GM23248 (cell line): ENCODE measurements at regions of chr6 and their contacts with region 1.

Region 1: GRCh38 chr6:38493931-38494547 is 145.7 kb downstream of the BTBD9 start:
- DNase-seq: peak; percentile 53
- H3K4me3 ChIP-seq: no peak overlapping the region
- H3K27ac ChIP-seq: no peak overlapping the region
- H3K4me1 ChIP-seq: no peaks in the 10 kb centered on the region
- H3K27me3 ChIP-seq: no peaks in the 10 kb centered on the region

Region 2: DNA sequence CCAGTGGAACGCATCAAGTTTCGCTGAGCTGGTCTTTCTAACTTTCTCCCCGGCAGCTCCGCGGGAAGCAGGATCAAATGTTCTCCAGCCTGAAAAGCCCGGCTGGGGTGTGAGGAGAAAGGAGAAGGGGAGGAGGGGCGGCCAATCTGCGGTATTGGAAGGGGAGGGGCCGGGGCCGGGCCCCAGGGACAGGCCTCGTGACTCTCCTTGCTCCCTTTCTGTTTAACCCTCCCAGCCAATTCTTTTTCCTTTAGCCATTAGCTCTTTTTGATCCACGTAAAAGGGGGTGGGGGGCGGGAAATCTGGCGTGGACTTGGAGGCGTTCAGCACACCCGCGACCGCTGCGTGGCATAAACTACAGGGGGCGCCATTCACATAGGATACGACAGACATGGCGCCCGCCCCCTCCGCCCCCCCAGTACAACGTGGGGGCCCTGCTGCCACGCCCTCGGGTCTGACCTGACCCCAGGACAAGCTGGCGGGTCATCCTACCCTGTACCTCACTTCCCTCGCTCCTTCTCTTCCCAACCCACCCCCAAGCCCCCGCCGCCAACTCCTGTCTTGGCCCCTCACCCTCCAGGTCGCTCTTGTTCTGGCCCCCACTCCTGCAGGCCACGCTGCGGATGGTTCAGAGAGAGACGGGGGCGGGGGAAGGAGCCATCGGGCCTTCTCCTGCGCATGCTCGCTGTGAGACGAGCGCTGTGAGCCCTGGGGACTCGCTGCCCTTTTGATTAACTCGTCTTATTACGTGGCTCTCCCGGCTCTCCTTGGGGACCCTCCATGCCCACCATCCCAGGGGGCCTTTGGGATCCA is 788.6 kb before region 1 on chr6:
- in situ Hi-C with region 1: loop called (anchors 25 kb)
- DNase-seq: peak; percentile 94
- H3K4me3 ChIP-seq: peak overlapping the region; percentile 72
- H3K27ac ChIP-seq: peak overlapping the region; percentile 16; the same call in 1 of the 2 replicates
- H3K4me1 ChIP-seq: no peaks in the 10 kb centered on the region; the same call in 1 of the 2 replicates
- H3K27me3 ChIP-seq: no peaks in the 10 kb centered on the region

Region 3: DNA sequence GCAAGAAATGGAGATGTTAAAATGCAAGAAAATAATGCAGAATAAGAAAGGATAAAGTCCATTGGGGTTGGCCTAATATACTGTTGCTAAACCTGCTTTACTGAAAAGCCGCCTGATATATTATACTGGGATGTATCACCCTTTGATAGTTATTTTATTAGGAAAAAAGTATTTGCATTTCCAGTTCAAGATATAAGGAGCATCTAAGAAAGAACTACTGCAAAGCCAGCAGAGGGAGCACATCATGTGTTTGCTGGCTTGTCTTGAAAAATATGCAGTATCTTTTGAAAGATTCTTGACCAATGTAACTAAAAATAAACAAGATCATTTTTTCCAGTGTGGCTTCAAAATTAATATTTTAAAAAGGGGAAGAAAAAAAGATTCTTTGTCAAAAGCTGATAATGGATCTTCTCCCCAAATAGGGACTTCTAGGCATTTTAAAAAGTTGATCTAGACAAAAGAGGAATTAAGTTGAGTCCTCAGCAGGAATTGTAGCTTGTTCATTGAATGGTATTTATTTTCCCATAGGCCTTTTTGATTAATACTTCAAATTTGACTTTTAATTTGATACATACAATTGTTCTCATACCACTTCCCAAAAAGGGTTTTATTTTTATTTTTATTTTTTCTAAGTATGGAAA is 459.6 kb before region 1 on chr6:
- in situ Hi-C with region 1: loop called (anchors 25 kb)
- DNase-seq: peak; percentile 63
- H3K4me3 ChIP-seq: no peak overlapping the region
- H3K27ac ChIP-seq: no peak overlapping the region
- H3K4me1 ChIP-seq: peaks cover 27% of the 10 kb centered on the region
- H3K27me3 ChIP-seq: no peaks in the 10 kb centered on the region

Region 4: DNA sequence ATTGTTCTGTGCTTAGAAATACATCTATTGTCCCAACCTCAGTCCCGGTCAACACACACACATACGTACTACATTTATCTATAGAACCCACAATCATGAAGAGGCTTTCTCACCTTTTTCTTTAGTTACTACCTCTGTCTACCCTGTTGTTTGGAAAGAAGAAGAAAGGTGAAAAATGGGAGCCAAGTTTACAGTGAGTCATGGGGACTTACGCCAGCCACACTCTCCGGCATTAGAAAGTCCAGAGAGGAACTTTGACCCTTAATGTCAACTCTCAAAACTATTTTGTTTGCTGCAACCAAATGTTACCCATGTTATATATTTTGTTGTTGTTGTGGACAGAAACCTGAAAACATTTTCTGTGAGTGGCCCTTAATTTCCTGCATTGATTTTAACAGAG is 415.4 kb before region 1 on chr6:
- in situ Hi-C with region 1: no loop called
- DNase-seq: no peak
- H3K4me3 ChIP-seq: no peak overlapping the region
- H3K27ac ChIP-seq: no peak overlapping the region
- H3K4me1 ChIP-seq: peaks cover 9% of the 10 kb centered on the region
- H3K27me3 ChIP-seq: no peaks in the 10 kb centered on the region

Region 5: GRCh38 chr6:38279420-38279819 is 214.6 kb before region 1 on chr6:
- in situ Hi-C with region 1: no loop called
- DNase-seq: no peak
- H3K4me3 ChIP-seq: no peak overlapping the region
- H3K27ac ChIP-seq: no peak overlapping the region
- H3K4me1 ChIP-seq: no peaks in the 10 kb centered on the region
- H3K27me3 ChIP-seq: no peaks in the 10 kb centered on the region

Region 6: DNA sequence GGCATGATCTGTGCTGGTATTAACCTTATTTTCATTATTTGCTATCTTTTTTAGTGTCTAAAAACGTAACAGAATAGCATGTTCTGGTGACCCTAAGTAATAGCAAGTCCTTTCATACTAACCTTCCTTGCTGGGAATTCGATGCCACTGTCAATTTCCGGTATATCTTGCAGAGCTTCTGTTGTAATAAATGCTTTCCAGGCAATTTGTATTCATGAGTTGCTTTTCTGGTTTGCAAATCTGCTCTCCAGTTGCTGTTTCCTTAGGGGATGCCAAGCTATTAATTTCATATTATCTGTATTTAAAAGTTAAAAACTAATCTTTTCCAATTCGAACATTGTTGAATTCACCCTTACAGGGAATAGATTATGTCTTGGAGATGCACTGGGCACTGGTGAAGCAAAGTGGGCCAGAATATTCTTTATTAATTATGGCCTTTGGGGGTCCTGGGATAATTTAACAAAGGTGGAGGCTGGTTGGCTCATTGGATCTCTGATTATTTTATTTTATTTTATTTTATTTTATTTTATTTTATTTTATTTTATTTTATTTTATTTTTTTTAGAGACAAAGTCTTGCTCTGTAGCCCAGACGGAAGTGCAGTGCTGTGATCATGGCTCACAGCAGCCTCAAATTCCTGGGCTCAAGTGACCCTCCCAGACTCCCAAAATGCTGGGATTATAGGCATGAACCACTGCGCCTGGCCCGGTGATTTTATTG is 430.9 kb after region 1 on chr6:
- in situ Hi-C with region 1: no loop called
- DNase-seq: no peak
- H3K4me3 ChIP-seq: no peak overlapping the region
- H3K27ac ChIP-seq: no peak overlapping the region
- H3K4me1 ChIP-seq: no peaks in the 10 kb centered on the region
- H3K27me3 ChIP-seq: 0 out of 2 replicates have a peak, but pooled peaks cover 3% of the 10 kb centered on the region